ENCODE measurements at regions of chr12 and their contacts with region 1.

Region 1: DNA sequence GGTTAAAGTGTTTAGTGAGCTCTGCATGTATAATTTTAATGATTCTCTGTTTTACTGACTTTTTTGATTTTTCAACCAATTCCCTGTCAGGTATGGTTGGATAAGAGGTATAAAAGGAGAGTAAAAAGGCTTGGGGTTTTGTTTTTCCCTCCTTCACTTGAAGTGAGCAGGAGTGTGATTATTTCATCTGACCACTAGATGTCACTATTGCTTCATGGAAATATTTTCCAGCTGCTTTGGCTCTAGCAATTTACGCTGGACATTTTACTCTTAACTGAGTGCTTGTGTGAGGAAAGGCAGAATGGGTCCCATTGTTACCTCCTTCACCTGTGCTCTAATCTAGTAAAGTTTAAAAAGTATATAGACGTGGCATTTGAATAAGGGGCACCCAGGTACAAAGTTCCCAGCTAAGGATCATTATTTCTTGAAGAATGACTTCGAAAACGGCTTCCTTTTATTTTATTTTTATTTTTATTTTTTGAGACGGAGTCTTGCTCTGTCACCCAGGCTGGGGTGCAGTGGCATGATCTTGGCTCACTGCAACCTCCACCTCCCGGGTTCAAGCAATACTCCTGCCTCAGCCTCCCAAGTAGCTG is 66.5 kb downstream of the TBC1D30 start:
- DNase-seq: no peak
- H3K4me3 Mint-ChIP-seq: no peak overlapping the region
- H3K27ac Mint-ChIP-seq: no peak overlapping the region
- H3K4me1 Mint-ChIP-seq: peaks cover 7% of the 10 kb centered on the region
- H3K27me3 Mint-ChIP-seq: peaks cover 10% of the 10 kb centered on the region

Region 2: GRCh38 chr12:64796208-64796845 is 94.6 kb before region 1 on chr12:
- intact Hi-C with region 1: loop called (anchors 5 kb)
- DNase-seq: peak; percentile 35
- H3K4me3 Mint-ChIP-seq: no peak overlapping the region
- H3K27ac Mint-ChIP-seq: no peak overlapping the region
- H3K4me1 Mint-ChIP-seq: peaks cover 1% of the 10 kb centered on the region
- H3K27me3 Mint-ChIP-seq: peaks cover 38% of the 10 kb centered on the region

Region 3: GRCh38 chr12:65106948-65107347 is 216.0 kb after region 1 on chr12:
- intact Hi-C with region 1: loop called (anchors 1 kb)
- DNase-seq: no peak
- H3K4me3 Mint-ChIP-seq: no peak overlapping the region
- H3K27ac Mint-ChIP-seq: no peak overlapping the region
- H3K4me1 Mint-ChIP-seq: no peaks in the 10 kb centered on the region
- H3K27me3 Mint-ChIP-seq: peaks cover 19% of the 10 kb centered on the region

Region 4: GRCh38 chr12:65121049-65121955 is 230.3 kb after region 1 on chr12 and contains the start of gene WIF1:
- intact Hi-C with region 1: loop called (anchors 5 kb)
- DNase-seq: no peak
- H3K4me3 Mint-ChIP-seq: peak within 1 kb of the TSS; percentile 37
- H3K27ac Mint-ChIP-seq: no peak within 1 kb of the TSS
- H3K4me1 Mint-ChIP-seq: peaks cover 5% of the 10 kb centered on the region
- H3K27me3 Mint-ChIP-seq: peaks cover 34% of the 10 kb centered on the region
- total RNA-seq, gene WIF1: not detected in 2 replicates

Region 5: DNA sequence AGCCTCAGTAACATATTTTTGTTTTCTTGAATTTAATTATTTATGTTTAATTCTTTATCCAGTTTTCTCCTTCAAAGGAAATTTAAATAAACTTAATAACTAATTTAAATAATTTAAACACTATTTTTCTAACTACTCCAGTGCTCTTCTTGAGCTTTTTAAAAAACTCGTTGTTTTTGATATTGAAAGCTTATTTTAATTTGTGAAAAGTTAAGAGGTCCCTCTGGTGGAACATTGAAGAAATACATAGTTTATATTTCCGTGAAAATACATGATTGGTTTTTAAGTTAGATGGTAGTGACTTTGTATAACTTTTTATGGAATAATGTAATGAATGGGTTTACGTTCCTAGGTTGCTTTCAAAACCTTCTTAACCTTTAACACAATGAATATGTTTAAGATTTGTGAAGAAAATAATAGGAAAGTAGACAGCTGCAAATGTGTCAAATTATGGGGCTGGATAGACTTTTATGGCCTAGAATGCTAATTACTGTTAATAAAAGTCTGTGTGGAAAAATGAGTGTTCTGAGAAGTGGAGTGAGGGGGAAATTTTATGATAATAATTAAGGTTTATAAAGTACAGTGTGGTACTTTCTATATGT is 341.6 kb after region 1 on chr12:
- intact Hi-C with region 1: loop called (anchors 2 kb)
- DNase-seq: no peak
- H3K4me3 Mint-ChIP-seq: no peak overlapping the region
- H3K27ac Mint-ChIP-seq: no peak overlapping the region
- H3K4me1 Mint-ChIP-seq: peaks cover 9% of the 10 kb centered on the region
- H3K27me3 Mint-ChIP-seq: no peaks in the 10 kb centered on the region

Region 6: GRCh38 chr12:65685514-65685913 is 794.5 kb after region 1 on chr12:
- intact Hi-C with region 1: loop called (anchors 10 kb)
- DNase-seq: no peak
- H3K4me3 Mint-ChIP-seq: no peak overlapping the region
- H3K27ac Mint-ChIP-seq: no peak overlapping the region
- H3K4me1 Mint-ChIP-seq: no peaks in the 10 kb centered on the region
- H3K27me3 Mint-ChIP-seq: peaks cover 4% of the 10 kb centered on the region

Region 7: DNA sequence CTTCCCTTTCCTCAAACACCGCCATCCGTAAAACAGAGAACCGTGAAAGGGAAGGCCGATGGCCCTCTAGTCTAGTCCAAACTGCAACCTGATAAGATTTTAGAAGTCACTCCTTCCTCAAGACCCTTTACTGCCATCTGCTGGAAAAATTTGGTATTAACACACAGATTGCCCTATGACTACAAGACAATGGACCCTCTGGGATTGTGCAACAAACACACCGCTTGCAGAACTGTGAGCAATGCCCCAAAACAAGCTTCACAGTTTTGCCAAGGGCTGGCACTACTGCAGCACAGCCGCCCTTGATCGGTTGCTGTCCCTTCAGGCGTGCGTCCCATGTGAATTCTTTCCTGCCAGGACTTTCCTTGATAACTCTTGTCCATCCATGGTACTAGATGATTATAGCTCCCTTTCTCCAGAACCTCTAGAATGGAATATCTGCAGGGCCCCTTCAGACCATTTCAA is 1216.5 kb after region 1 on chr12:
- intact Hi-C with region 1: loop called (anchors 5 kb)
- DNase-seq: peak; percentile 36
- H3K4me3 Mint-ChIP-seq: no peak overlapping the region
- H3K27ac Mint-ChIP-seq: no peak overlapping the region
- H3K4me1 Mint-ChIP-seq: peaks cover 8% of the 10 kb centered on the region
- H3K27me3 Mint-ChIP-seq: peaks cover 21% of the 10 kb centered on the region

Measured in activated T-helper 2 cell treated with anti-CD3 and anti-CD28 coated beads, Interferon-gamma antibody, Interleukin-2, Interleukin-4, amounts not matched to agents 10 μg/mL and 5 μg/mL and 100 μg/mL, durations not matched to agents 14 hours and 24 hours and 36 hours (primary cell).